Left ventricle myocardium inferior (tissue), 1 donor: ENCODE measurements at regions of chr6 and their contacts with region 1.

Region 1: DNA sequence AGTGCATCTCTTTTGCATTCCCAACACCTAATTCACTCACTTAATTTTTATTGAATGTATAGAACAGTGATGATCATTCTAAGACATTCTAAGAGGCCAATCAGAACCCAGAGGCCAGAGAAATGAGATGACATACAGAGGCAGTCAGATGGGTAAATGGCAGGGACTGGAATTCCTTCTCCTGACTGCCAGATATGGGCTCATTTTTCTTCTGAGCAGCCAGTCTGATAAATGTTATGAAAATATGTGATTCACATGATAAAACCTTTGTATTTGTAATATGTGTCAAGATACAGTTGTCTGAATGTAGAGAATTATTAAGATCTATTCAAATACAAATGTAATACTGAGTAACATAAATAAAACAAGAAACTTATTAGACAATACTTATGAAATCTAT is 277.8 kb downstream of the EPM2A start:
- DNase-seq: no peak
- H3K4me3 ChIP-seq: no peak overlapping the region
- H3K27ac ChIP-seq: no peak overlapping the region
- H3K4me1 ChIP-seq: no peaks in the 10 kb centered on the region
- H3K27me3 ChIP-seq: no peaks in the 10 kb centered on the region
- CTCF ChIP-seq: no peak

Region 2: DNA sequence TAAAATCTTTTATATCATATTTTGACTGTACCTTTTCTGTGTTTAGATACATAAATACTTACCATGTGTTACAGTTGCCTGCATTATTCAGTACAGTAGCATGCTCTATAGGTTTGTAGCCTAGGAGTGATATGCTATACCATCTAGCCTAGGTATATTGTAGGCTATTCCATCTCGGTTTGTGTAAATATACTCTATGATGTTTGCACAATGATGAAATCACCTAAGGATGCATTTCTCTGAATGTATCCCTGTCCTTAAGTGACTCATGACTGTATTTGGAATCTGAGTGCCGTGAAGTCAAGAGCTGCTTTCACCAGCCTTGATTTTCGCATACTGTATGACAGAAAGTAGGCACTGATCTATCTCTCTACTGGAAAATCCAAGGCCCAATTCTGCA is 1042.5 kb before region 1 on chr6:
- intact Hi-C with region 1: no loop called
- DNase-seq: no peak
- H3K4me3 ChIP-seq: no peak overlapping the region
- H3K27ac ChIP-seq: no peak overlapping the region
- H3K4me1 ChIP-seq: peaks cover 69% of the 10 kb centered on the region
- H3K27me3 ChIP-seq: no peaks in the 10 kb centered on the region
- CTCF ChIP-seq: no peak

Region 3: DNA sequence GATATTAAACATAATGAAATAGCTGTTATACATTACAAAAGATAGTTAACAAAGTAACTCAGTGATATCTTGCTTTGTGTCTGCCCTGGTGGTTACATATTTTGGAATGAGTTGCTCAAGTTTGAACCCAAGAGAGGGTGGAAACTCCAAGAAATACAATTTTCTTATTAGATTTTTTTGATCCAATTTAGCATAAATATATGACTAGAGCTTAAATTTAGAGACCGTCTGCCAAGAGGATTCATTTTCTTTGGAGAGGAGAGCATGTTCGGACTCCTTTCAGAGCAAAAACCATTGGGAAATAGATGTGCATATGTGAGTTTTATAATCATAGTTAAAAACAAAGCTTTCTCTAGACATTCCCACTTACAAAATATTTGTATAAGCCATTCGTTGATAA is 75.6 kb before region 1 on chr6:
- intact Hi-C with region 1: no loop called
- DNase-seq: no peak
- H3K4me3 ChIP-seq: no peak overlapping the region
- H3K27ac ChIP-seq: no peak overlapping the region
- H3K4me1 ChIP-seq: no peaks in the 10 kb centered on the region
- H3K27me3 ChIP-seq: no peaks in the 10 kb centered on the region
- CTCF ChIP-seq: no peak

Region 4: GRCh38 chr6:145396499-145396898 is 61.1 kb before region 1 on chr6:
- intact Hi-C with region 1: no loop called
- DNase-seq: no peak
- H3K4me3 ChIP-seq: no peak overlapping the region
- H3K27ac ChIP-seq: no peak overlapping the region
- H3K4me1 ChIP-seq: no peaks in the 10 kb centered on the region
- H3K27me3 ChIP-seq: no peaks in the 10 kb centered on the region
- CTCF ChIP-seq: no peak

Region 5: GRCh38 chr6:145621776-145622175 is 164.2 kb after region 1 on chr6:
- intact Hi-C with region 1: loop called (anchors 5 kb)
- DNase-seq: no peak
- H3K4me3 ChIP-seq: no peak overlapping the region
- H3K27ac ChIP-seq: no peak overlapping the region
- H3K4me1 ChIP-seq: peaks cover 3% of the 10 kb centered on the region
- H3K27me3 ChIP-seq: no peaks in the 10 kb centered on the region
- CTCF ChIP-seq: no peak